Heart left ventricle (tissue), 16 donors: ENCODE measurements at regions of chr1 and their contacts with region 1.

Region 1: GRCh38 chr1:165597883-165598675 is 33.0 kb upstream of the MGST3 start:
- DNase-seq: peak; percentile 97 to 99 (median 98)
- ATAC-seq: peak; percentile 99 to 100 (median 99)
- H3K4me3 ChIP-seq: peak overlapping the region; percentile 12 to 71 (median 60)
- H3K27ac ChIP-seq: peak overlapping the region in 11 of 12 donors; percentile 17 to 75 (median 45)
- H3K4me1 ChIP-seq: peaks cover 0 to 26% (median 7%) of the 10 kb centered on the region in 12 donors
- H3K27me3 ChIP-seq: peaks cover 0 to 38% (median 0%) of the 10 kb centered on the region in 9 donors
- CTCF ChIP-seq: no peak
- POLR2A ChIP-seq: peak in 1 of 2 donors; percentile 15

Region 2: GRCh38 chr1:165144757-165145397 is 453.2 kb before region 1 on chr1:
- intact Hi-C with region 1: loop called in 5 of 10 experiments (anchors 10 kb)
- DNase-seq: peak in 4 of 5 donors; percentile 16 to 37 (median 32)
- ATAC-seq: peak in 3 of 4 donors; percentile 62 to 80 (median 72)
- H3K4me3 ChIP-seq: no peak overlapping the region
- H3K27ac ChIP-seq: no peak overlapping the region
- H3K4me1 ChIP-seq: no peaks in the 10 kb centered on the region
- H3K27me3 ChIP-seq: peaks cover 0 to 49% (median 10%) of the 10 kb centered on the region in 9 donors
- CTCF ChIP-seq: peak; percentile 53 to 79 (median 68)
- POLR2A ChIP-seq: no peak

Region 3: DNA sequence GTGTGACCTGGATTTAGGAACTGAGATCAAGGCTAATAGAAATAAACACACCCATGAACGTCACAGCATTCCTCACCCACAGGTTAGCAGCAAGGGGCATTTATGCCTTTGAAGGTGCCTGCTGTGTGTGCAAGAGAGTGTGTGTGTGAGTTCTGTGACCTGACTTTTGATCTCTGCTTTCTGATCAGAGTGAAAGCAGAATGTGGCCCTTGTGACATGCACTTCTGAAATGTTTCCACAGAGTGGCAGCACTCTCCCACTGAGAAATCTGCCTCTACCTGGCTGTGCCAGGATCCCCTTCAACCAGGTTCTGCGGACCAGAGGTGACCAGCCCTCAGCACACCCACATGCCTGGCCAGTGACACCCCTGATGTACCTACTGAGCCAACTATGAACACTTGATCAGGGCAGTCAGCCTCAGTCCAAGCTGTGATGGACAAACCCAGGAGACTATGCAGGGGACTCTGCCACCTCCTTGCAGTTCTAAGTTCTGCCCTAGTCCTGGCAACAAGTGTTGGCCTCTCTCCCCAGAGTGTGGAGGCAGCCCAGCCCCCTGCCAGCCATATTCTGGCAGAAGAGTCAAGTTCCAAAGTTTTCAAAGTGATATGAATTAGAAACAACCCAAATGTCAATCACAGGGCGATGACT is 194.1 kb before region 1 on chr1:
- intact Hi-C with region 1: loop called (anchors 1 to 2 kb)
- DNase-seq: peak in 1 of 5 donors; percentile 29
- ATAC-seq: peak in 3 of 4 donors; percentile 52 to 62 (median 61)
- H3K4me3 ChIP-seq: no peak overlapping the region
- H3K27ac ChIP-seq: no peak overlapping the region
- H3K4me1 ChIP-seq: peaks cover 0 to 4% (median 0%) of the 10 kb centered on the region in 12 donors
- H3K27me3 ChIP-seq: peaks cover 0 to 14% (median 0%) of the 10 kb centered on the region in 9 donors
- CTCF ChIP-seq: peak; percentile 40 to 72 (median 65)
- POLR2A ChIP-seq: no peak

Region 4: DNA sequence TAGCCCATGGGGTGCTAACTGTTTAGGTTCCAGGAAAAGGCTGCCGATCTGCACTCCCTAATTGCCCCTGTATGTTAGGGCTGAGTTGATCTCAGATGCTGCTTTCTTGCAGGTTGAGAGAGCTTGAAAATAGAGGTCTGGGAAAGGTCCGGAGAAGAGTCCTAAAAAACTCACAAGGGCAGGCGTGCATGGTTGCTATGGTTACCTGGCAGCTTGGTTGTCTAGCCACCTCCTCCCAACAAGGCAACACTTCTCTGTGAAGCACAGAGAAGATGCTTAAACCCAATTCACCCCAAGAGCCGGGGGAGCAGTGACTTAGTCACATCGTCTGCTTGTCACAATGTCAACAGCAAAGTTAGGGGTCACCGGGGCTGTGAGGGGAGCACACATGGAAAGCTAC is 85.3 kb before region 1 on chr1:
- intact Hi-C with region 1: no loop called
- DNase-seq: no peak
- ATAC-seq: no peak
- H3K4me3 ChIP-seq: no peak overlapping the region
- H3K27ac ChIP-seq: no peak overlapping the region
- H3K4me1 ChIP-seq: no peaks in the 10 kb centered on the region
- H3K27me3 ChIP-seq: no peaks in the 10 kb centered on the region
- CTCF ChIP-seq: no peak
- POLR2A ChIP-seq: no peak

Region 5: DNA sequence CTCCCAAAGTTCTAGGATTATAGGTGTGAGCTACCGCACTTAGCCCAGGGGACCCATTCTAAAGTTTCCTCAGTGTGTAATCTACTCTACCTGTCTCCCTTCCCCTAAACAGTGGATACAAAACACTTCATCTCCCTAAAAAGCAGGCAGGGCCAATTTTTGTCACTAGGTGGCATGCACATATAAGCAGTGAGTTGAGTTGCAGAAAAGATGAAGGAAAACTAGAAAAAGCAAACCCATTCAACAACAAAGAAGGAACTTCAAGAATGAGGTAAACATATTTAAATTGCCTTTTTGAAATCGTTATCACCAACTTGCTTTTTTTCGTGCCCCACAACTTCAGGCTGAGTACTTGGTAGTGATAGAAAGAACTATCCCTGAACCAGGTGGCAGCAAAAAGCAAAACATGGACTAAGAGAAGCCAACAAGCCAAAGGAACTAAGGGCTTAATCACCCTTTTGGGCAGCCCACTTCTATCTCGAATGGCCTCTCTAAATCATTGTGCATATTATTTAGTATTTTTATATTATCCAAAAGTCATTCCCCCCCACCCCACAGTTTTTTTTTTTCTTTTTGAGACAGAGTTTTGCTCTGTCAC is 119.9 kb after region 1 on chr1:
- intact Hi-C with region 1: loop called in 1 of 10 experiments (anchors 10 kb)
- DNase-seq: peak in 2 of 5 donors; percentile 21
- ATAC-seq: peak in 2 of 4 donors; percentile 41 to 49
- H3K4me3 ChIP-seq: no peak overlapping the region
- H3K27ac ChIP-seq: no peak overlapping the region
- H3K4me1 ChIP-seq: no peaks in the 10 kb centered on the region
- H3K27me3 ChIP-seq: no peaks in the 10 kb centered on the region
- CTCF ChIP-seq: peak; percentile 47 to 77 (median 58)
- POLR2A ChIP-seq: no peak

Region 6: DNA sequence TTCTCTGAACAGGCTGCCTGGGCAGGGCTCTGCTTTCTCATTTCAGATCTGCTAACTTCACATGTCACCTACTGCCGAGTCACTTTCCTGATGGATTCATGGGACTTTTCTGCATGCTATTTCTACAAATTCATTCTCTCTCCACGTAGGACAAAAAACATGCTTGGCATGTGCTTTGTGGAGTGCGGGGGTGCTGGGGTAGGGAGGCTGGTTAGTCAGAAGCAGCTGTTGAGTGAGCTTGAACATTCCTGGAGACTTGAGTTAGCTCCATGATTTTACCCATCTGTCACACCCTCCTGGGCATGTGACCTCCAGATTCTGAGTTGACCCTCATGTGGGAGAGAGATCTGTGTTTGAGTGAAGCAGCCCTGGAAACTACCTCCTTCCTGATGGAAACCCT is 300.8 kb after region 1 on chr1:
- intact Hi-C with region 1: loop called in 1 of 10 experiments (anchors 10 kb)
- DNase-seq: peak in 2 of 5 donors; percentile 41 to 47
- ATAC-seq: peak; percentile 33 to 73 (median 50)
- H3K4me3 ChIP-seq: no peak overlapping the region
- H3K27ac ChIP-seq: peak overlapping the region in 10 of 12 donors; percentile 1 to 77 (median 59)
- H3K4me1 ChIP-seq: peaks cover 0 to 71% (median 57%) of the 10 kb centered on the region in 12 donors
- H3K27me3 ChIP-seq: no peaks in the 10 kb centered on the region
- CTCF ChIP-seq: no peak
- POLR2A ChIP-seq: no peak